ENCODE measurements at regions of chr1 and their contacts with region 1.

Region 1: DNA sequence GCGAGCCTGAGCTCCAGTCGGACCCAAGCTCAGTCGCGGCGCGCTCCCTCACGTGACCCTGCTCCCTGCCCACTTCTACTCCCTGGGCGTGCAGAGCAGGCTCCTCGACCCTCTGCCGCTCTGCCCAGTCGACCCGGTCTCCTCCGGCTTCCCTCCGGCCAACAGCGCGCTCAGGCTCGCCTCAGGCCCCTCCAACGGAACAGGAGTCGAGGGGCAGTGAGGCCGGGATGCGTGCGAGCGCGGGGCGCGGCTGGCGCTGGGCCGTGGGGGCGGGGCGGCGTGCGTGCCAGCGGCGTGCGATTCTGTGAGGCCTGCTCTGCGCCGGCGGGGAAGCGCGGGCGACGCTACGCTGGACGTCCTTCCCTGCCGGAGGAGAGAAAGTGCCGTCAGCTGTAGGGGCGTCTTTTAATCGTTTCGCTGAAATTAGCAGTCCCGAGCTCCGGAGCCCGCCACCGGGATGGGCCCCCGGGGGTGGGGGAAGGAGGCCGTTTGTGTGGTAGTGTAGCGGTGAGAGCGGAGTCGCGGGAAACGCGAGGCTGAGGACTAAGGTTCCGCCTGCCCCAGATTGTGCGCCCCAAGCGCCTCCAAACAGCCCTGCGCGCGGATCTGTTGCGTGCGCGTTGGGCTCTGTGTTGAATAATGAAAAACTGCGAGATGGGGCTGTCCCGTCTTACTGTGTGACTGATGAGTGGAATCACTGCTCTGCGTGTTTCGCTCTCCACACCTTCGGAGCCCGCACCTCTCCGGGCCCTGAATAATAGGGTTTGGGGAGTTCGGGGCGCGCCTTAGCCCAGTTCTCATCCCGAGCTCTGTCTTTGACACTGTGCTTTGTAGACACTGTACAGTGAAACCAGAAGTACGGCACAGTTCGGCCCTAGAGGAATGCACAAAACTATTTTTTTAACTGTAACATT is at the start of gene ACBD6:
- DNase-seq: peak; percentile 93
- H3K4me3 Mint-ChIP-seq: peak within 1 kb of the TSS; percentile 96
- H3K27ac Mint-ChIP-seq: peak within 1 kb of the TSS; percentile 94
- H3K4me1 Mint-ChIP-seq: peaks cover 33% of the 10 kb centered on the region
- H3K27me3 Mint-ChIP-seq: no peaks in the 10 kb centered on the region
- total RNA-seq, gene ACBD6: 36.7 to 40.8 TPM

Region 2: DNA sequence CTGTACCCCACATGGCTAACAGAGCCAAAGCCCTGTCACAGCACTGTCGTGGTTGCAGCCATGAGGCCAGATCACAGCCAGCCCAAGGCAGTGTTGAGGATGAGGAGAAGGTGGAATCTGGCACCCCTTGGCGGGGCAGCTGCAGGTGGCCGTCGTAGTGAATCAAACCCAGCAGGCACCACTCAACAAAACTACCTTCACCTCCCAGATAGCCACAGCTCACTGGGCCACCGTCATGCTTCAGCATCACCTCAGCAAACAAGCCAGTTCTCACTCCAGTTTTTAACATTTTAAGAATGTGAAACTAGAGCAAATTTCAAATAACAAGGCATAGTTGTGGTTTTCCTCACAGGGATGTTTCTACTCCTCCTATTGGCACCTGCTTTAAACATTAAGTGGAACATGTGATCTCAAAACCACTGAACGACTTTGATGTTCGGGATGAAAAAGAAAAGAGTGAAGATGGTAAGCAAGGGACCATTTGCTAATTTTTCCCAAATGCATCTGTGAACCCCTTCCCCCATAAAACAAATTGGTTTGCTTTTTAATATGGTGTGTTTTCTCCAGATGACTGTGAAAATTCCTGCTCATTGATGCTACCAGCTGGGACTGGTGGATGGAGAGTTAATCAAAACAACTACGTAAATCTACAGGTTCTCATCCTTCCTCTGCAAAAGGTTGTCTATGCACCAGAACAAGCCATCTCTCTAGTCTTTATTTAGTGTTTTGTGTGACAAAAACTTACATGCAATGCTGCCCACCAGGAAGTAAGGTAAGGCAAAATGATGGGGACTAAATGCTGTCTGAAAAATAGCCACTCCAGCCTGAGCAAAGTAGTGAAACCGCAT is 670.5 kb before region 1 on chr1:
- CTCF ChIA-PET with region 1: no interaction called
- POLR2A ChIA-PET with region 1: no interaction called
- intact Hi-C with region 1: loop called (anchors 5 kb)
- DNase-seq: peak; percentile 46
- H3K4me3 Mint-ChIP-seq: no peak overlapping the region
- H3K27ac Mint-ChIP-seq: peak overlapping the region; percentile 29
- H3K4me1 Mint-ChIP-seq: peaks cover 24% of the 10 kb centered on the region
- H3K27me3 Mint-ChIP-seq: no peaks in the 10 kb centered on the region

Region 3: GRCh38 chr1:180482425-180483275 is 20.0 kb before region 1 on chr1:
- CTCF ChIA-PET with region 1: interaction called, 10 read pairs
- POLR2A ChIA-PET with region 1: interaction called, 3 read pairs
- intact Hi-C with region 1: no loop called
- DNase-seq: no peak
- H3K4me3 Mint-ChIP-seq: no peak overlapping the region
- H3K27ac Mint-ChIP-seq: no peak overlapping the region
- H3K4me1 Mint-ChIP-seq: peaks cover 15% of the 10 kb centered on the region
- H3K27me3 Mint-ChIP-seq: no peaks in the 10 kb centered on the region

Region 4: DNA sequence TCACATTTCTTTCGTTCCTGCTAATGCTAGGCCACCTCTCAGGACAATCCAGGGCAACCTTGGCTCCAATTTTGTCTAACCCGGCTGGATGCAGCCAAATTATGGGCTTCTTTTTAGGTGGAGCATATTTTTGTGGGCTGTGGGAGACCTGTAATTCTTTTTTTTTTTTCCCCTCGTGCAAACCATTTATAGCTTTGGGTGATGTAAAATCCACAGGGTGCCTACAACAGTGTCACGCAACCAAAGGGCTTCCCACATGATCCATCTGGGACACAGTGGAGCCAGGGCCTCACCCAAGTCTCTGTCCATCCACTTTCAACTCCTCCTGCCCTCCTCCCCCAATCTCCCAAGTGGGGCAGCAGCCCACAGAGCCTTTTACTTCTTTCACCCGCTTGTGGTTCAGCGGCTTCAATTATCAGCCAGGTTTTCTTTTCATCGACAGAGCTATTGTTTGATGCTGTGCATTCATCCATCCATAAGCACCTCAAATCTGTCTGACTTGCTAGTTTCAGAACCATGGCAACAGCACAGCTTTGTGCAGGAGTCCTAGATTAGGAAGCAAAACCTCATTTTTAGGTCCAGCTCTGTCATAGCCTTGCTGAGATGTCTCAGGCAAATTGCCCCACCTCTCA is 46.2 kb after region 1 on chr1:
- CTCF ChIA-PET with region 1: no interaction called
- POLR2A ChIA-PET with region 1: no interaction called
- intact Hi-C with region 1: no loop called
- DNase-seq: no peak
- H3K4me3 Mint-ChIP-seq: no peak overlapping the region
- H3K27ac Mint-ChIP-seq: no peak overlapping the region
- H3K4me1 Mint-ChIP-seq: no peaks in the 10 kb centered on the region
- H3K27me3 Mint-ChIP-seq: no peaks in the 10 kb centered on the region

Region 5: GRCh38 chr1:180571832-180572636 is 69.4 kb after region 1 on chr1:
- CTCF ChIA-PET with region 1: no interaction called
- POLR2A ChIA-PET with region 1: no interaction called
- intact Hi-C with region 1: loop called (anchors 1 kb)
- DNase-seq: peak; percentile 77
- H3K4me3 Mint-ChIP-seq: peak overlapping the region; percentile 17
- H3K27ac Mint-ChIP-seq: peak overlapping the region; percentile 48
- H3K4me1 Mint-ChIP-seq: peaks cover 22% of the 10 kb centered on the region
- H3K27me3 Mint-ChIP-seq: peaks cover 20% of the 10 kb centered on the region

Region 6: GRCh38 chr1:180863158-180863775 is 360.6 kb after region 1 on chr1:
- CTCF ChIA-PET with region 1: interaction called, 11 read pairs
- POLR2A ChIA-PET with region 1: no interaction called
- intact Hi-C with region 1: no loop called
- DNase-seq: no peak
- H3K4me3 Mint-ChIP-seq: no peak overlapping the region
- H3K27ac Mint-ChIP-seq: no peak overlapping the region
- H3K4me1 Mint-ChIP-seq: no peaks in the 10 kb centered on the region
- H3K27me3 Mint-ChIP-seq: no peaks in the 10 kb centered on the region

Region 7: GRCh38 chr1:181152892-181153633 is 650.4 kb after region 1 on chr1:
- CTCF ChIA-PET with region 1: no interaction called
- POLR2A ChIA-PET with region 1: interaction called, 3 read pairs
- intact Hi-C with region 1: loop called (anchors 2 kb)
- DNase-seq: no peak
- H3K4me3 Mint-ChIP-seq: no peak overlapping the region
- H3K27ac Mint-ChIP-seq: no peak overlapping the region
- H3K4me1 Mint-ChIP-seq: peaks cover 41% of the 10 kb centered on the region
- H3K27me3 Mint-ChIP-seq: no peaks in the 10 kb centered on the region

Measured in activated CD4-positive, alpha-beta memory T cell treated with anti-CD3 and anti-CD28 coated beads for 36 hours (primary cell).